Ascending aorta (tissue), 2 donors: ENCODE measurements at regions of chr1 and their contacts with region 1.

Region 1: GRCh38 chr1:17053685-17054410 is at the start of gene SDHB:
- DNase-seq: peak; percentile 93 to 99
- H3K4me3 ChIP-seq: peak within 1 kb of the TSS; percentile 82 to 91
- H3K27ac ChIP-seq: peak within 1 kb of the TSS; percentile 73 to 84
- H3K4me1 ChIP-seq: peaks cover 4 to 17% of the 10 kb centered on the region in 2 donors
- H3K27me3 ChIP-seq: no peaks in the 10 kb centered on the region
- CTCF ChIP-seq: no peak
- total RNA-seq, gene SDHB: 112 TPM

Region 2: DNA sequence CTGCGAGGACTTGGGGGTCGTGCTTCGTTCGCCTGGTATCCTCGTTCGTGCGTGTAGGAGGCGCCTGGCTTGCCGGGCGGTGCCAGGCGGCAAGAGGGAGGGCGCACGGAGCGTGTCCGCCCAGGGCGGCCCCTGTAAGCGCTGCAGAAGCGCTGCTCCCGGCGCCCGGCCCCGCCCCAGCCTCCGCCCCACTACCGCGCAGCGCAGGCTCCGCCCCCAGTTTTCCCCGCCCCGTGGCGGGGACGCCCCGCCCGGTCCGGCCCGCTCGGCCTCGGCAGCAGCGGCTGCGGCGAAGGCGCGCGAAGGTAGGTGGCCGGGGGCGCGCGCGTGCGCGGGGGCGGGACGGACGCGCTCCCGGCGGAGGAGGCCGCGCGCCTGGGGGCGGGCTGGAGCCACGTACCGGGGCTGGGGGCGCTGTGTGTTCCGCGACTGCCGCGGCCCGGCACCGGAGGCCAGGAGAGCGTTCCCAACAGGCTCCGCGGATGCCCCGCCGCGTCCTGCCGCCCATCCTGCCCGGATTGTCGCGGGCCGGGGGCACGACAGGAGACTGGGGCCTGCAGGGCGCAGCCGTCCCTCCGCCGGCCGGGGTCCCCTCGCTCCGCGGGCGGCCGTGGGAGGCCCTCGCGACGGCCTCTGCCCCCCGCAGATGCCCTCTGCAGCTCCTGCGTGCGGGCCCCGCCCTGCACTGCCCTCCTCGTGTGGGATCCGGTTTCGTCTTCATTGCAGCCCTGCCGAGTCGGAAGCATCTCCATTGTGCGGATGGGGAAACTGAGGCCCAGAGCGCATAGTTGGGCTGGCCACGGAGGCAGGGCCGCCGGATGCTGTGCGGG is 139.8 kb before region 1 on chr1:
- intact Hi-C with region 1: loop called (anchors 5 kb)
- DNase-seq: peak; percentile 71 to 97
- H3K4me3 ChIP-seq: peak overlapping the region; percentile 89 to 91
- H3K27ac ChIP-seq: peak overlapping the region; percentile 72 to 74
- H3K4me1 ChIP-seq: peaks cover 0 to 20% of the 10 kb centered on the region in 2 donors
- H3K27me3 ChIP-seq: no peaks in the 10 kb centered on the region
- CTCF ChIP-seq: peak in 1 of 3 experiments; percentile 26

Region 3: GRCh38 chr1:17011439-17012307 is 42.2 kb before region 1 on chr1 and contains the start of gene ATP13A2:
- intact Hi-C with region 1: loop called (anchors 2 kb)
- DNase-seq: peak; percentile 33 to 87
- H3K4me3 ChIP-seq: peak within 1 kb of the TSS; percentile 84 to 90
- H3K27ac ChIP-seq: no peak within 1 kb of the TSS
- H3K4me1 ChIP-seq: peaks cover 13 to 14% of the 10 kb centered on the region in 2 donors
- H3K27me3 ChIP-seq: no peaks in the 10 kb centered on the region
- CTCF ChIP-seq: no peak
- total RNA-seq, gene ATP13A2: 39.2 TPM